ENCODE measurements at regions of chr15 and their contacts with region 1.

Region 1: GRCh38 chr15:25863111-25863967 is at the start of gene ATP10A:
- DNase-seq: peak in 1 of 2 donors; percentile 75
- H3K4me3 ChIP-seq: peak within 1 kb of the TSS; percentile 80 to 96
- H3K27ac ChIP-seq: peak within 1 kb of the TSS; percentile 94 to 95
- H3K4me1 ChIP-seq: peaks cover 7 to 18% of the 10 kb centered on the region in 2 donors
- H3K27me3 ChIP-seq: no peaks in the 10 kb centered on the region
- CTCF ChIP-seq: peak in 1 of 3 experiments; percentile 20
- total RNA-seq, gene ATP10A: 26.7 TPM

Region 2: DNA sequence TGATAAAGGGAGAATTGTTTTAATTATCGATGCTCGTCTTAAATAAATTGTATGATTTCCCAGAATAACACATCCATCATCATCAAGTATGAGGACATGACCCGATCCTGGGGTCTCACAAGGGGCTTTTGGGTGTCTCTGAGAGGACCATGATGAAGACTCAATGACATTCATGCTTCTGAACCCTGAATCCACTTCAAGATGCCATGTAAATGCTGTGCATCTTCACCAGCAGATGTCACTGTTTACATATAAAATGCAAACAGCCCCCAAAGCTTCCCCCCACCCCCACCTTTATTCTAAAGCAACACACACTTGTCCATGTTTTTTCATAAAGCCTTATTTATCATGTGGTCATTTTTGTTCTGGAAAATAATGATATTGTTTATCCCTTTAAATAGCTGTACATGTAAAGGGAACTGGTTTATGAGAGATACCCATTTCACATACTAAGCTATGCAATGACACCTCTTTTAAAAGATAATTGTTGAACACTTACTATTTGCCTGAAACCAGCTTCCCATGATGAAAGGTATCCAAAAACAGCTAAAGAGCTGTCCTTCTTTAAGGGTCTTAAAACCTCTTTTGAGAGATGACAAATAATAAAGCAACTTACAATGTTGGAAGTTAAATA is 354.9 kb before region 1 on chr15:
- intact Hi-C with region 1: loop called (anchors 5 kb)
- DNase-seq: no peak
- H3K4me3 ChIP-seq: no peak overlapping the region
- H3K27ac ChIP-seq: no peak overlapping the region
- H3K4me1 ChIP-seq: peaks cover 0 to 6% of the 10 kb centered on the region in 2 donors
- H3K27me3 ChIP-seq: no peaks in the 10 kb centered on the region
- CTCF ChIP-seq: peak; percentile 42 to 86 (median 73)

Region 3: DNA sequence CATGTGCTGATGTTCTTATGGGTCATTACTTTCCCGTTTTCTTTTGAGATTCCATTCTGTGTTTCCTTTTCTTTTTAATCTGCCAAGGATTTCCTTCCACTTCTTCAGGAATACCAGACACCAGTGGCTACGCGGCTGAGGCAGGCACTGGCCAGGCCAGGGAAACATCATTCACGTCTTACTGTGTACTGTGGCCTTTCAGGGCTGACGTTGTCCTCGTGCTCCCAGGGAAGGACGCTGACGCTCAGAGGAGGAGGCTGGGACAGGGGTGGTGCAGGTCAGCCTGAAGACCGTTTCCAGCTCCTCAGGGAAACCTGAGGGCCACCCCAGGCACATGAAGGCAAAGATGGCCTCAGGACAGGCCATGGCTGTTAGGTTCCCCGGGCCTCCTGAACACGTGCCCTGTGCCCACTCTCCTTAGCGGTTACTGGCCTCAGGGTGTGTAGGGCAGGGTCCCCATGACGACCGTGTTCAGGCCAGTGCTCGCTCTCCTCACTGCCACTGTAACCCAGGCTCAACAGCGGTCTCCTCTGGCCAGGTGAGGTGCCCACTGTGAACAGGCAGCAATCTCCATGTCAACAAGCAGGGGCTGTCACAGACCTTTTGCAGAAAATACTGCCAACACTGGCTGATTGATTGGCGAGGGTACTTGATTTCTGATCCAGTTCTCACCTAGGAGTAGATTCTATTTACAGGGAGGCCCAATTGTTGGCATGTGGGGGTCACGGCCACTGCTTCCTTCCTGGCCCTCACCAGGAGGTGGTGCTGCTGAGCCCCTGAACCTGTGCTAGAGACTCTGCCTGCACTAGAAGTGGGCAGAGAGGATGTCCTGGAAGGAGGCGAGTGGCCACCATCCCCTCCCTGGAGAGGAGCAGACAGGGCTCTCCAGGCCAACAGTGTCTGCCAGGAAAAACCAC is 169.8 kb before region 1 on chr15:
- intact Hi-C with region 1: loop called (anchors 5 kb)
- DNase-seq: peak in 1 of 2 donors; percentile 73
- H3K4me3 ChIP-seq: no peak overlapping the region
- H3K27ac ChIP-seq: peak overlapping the region; percentile 47 to 59
- H3K4me1 ChIP-seq: peaks cover 0 to 20% of the 10 kb centered on the region in 2 donors
- H3K27me3 ChIP-seq: no peaks in the 10 kb centered on the region
- CTCF ChIP-seq: peak; percentile 50 to 68 (median 62)

Region 4: GRCh38 chr15:25790000-25790660 is 73.2 kb before region 1 on chr15:
- intact Hi-C with region 1: loop called (anchors 2 kb)
- DNase-seq: peak in 1 of 2 donors; percentile 84
- H3K4me3 ChIP-seq: no peak overlapping the region
- H3K27ac ChIP-seq: peak overlapping the region; percentile 64 to 71
- H3K4me1 ChIP-seq: peaks cover 8 to 41% of the 10 kb centered on the region in 2 donors
- H3K27me3 ChIP-seq: no peaks in the 10 kb centered on the region
- CTCF ChIP-seq: no peak

Region 5: GRCh38 chr15:25933456-25934158 is 70.3 kb after region 1 on chr15:
- intact Hi-C with region 1: loop called (anchors 1 kb)
- DNase-seq: peak in 1 of 2 donors; percentile 88
- H3K4me3 ChIP-seq: peak overlapping the region; percentile 31 to 53
- H3K27ac ChIP-seq: peak overlapping the region in 1 of 2 donors; percentile 22
- H3K4me1 ChIP-seq: peaks cover 0 to 17% of the 10 kb centered on the region in 2 donors
- H3K27me3 ChIP-seq: no peaks in the 10 kb centered on the region
- CTCF ChIP-seq: peak; percentile 61 to 76 (median 71)

Region 6: DNA sequence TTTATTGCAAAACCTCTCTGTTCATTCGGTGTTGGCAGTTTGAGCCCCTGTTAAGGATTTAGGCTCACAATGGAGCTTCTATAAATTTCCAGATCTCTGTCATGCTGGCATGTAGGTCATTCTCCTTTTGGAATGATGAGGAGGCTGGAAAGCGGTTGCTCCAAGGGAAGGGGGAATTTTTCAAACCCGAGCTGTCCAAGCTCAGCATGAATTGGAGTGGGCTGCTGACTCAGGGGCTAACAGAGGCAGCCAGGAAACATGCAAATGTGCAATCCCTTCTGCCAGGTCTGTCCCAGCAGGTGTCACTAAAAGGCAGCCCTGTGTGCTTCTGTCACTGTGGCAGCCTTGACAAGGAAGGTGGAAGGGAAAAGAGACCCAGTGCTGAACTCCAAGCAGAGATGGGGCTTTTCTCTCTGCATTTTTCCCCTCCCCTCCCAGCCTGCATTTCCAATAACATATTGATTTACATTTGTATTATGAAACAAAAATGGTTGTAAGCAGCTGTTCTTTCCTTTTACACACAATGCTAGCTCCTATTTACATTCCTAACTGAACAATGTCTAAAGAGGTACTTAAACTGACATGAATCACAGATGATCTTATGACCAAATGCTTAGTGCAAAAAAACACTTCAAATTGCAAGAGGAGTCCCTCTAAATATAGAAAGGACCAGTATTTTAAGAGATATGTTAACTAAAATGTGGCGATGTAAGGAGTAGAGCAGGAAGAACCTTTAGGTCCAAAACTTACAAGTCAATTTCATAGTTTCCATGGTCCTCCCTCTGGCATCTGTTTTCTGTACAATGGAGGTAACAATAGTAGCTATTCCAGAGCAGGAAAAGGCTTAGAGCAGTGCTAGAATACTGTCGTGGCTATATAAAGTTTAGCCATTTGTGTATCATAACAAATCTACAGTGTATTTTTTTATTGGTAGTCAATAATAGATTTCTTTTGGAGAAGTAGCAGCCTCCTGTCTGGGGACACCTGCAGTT is 84.3 kb after region 1 on chr15:
- intact Hi-C with region 1: no loop called
- DNase-seq: no peak
- H3K4me3 ChIP-seq: no peak overlapping the region
- H3K27ac ChIP-seq: no peak overlapping the region
- H3K4me1 ChIP-seq: no peaks in the 10 kb centered on the region
- H3K27me3 ChIP-seq: no peaks in the 10 kb centered on the region
- CTCF ChIP-seq: peak in 1 of 3 experiments; percentile 22

Region 7: GRCh38 chr15:26095710-26096330 is 232.5 kb after region 1 on chr15:
- intact Hi-C with region 1: no loop called
- DNase-seq: no peak
- H3K4me3 ChIP-seq: no peak overlapping the region
- H3K27ac ChIP-seq: no peak overlapping the region
- H3K4me1 ChIP-seq: no peaks in the 10 kb centered on the region
- H3K27me3 ChIP-seq: no peaks in the 10 kb centered on the region
- CTCF ChIP-seq: peak in 2 of 3 experiments; percentile 18 to 37

Measured in ascending aorta (tissue), 2 donors.